A673 (cell line): ENCODE measurements at regions of chr5 and their contacts with region 1.

Region 1: DNA sequence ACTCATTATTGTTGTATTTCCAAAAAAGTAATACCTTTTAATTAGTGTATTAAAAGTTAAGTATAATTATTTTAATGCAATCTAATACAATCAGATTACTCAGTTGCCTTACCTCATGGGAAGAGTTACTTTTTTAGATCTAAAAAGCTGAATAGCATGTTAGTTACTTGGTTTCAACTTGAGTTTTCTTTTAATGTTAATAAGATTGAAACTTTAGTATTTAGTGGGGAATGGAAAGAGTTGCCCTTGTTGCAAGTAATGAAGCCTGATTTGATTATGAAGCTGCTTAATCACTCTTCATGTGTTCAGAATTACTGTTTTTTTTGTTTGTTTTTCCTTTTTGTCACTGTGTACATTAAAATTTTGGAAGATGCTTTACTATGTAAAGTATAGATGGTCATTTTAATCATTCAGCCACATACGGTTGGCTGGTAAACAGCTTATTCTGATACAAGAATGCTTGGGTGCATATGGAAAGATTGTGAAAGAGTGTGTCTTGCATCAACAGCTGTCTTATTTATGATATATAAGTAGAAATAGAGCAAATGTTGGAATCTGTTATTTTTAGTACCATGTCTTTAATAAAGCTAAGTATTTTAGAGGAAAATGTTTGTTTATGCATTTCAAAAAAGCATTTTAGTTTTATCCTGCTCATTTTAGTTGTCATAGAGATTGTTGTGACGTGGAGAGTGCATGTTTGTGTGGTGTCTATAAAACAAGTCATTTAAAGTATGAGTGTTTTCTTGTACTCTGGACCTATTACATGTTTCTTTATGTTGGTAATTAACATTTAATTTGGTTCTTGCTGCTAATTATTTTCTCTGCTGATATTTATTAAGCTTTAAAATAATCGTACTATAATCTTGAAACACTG is 36.4 kb downstream of the SREK1 start:
- DNase-seq: no peak
- H3K4me3 ChIP-seq: no peak overlapping the region
- H3K27ac ChIP-seq: no peak overlapping the region
- H3K4me1 ChIP-seq: peaks cover 6% of the 10 kb centered on the region
- H3K27me3 ChIP-seq: no peaks in the 10 kb centered on the region
- CTCF ChIP-seq: no peak

Region 2: DNA sequence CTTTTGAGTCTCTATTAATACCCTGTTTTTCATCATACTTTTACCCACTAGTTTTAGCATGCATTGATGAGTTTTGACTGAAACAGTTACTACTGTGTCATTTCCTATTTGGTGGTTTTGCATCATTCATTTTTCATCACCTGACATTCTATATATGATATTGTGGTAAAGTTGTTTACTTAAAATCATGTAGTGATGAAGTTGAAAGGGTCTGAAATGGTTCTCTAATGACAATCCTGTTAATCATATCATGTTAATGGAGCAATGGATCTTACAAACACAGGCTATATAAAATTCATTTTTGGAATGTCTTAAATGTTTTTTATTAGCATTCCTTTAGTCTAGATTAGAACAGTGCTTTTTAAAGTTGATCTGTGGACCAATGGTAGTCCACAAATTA is 170.0 kb before region 1 on chr5:
- CTCF ChIA-PET with region 1: no interaction called
- POLR2A ChIA-PET with region 1: no interaction called
- intact Hi-C with region 1: no loop called
- DNase-seq: no peak
- H3K4me3 ChIP-seq: no peak overlapping the region
- H3K27ac ChIP-seq: no peak overlapping the region
- H3K4me1 ChIP-seq: no peaks in the 10 kb centered on the region
- H3K27me3 ChIP-seq: no peaks in the 10 kb centered on the region
- CTCF ChIP-seq: no peak

Region 3: DNA sequence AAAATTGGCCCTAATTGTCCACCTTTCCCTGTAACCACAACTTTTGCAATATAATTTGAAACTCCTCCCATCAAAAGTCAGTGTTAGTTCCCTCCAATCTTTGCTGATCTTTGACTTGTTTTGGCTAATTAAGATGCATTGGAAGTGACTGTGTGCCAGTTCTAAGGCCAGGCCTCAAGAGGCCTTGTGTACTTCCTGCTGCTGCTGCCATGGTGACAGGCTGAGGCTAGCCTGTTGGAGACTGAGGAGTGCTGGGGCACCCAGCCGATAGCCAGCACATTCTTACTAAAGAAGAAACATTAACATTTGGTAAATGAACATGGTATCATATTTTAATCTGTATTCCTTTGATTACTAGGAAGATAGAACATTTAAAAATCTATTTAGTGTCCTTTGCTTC is 50.0 kb after region 1 on chr5:
- CTCF ChIA-PET with region 1: no interaction called
- POLR2A ChIA-PET with region 1: no interaction called
- intact Hi-C with region 1: no loop called
- DNase-seq: no peak
- H3K4me3 ChIP-seq: no peak overlapping the region
- H3K27ac ChIP-seq: no peak overlapping the region
- H3K4me1 ChIP-seq: no peaks in the 10 kb centered on the region
- H3K27me3 ChIP-seq: no peaks in the 10 kb centered on the region
- CTCF ChIP-seq: no peak

Region 4: GRCh38 chr5:66757188-66757833 is 576.8 kb after region 1 on chr5:
- CTCF ChIA-PET with region 1: no interaction called
- POLR2A ChIA-PET with region 1: no interaction called
- intact Hi-C with region 1: loop called (anchors 5 kb)
- DNase-seq: peak; percentile 59
- H3K4me3 ChIP-seq: no peak overlapping the region
- H3K27ac ChIP-seq: no peak overlapping the region
- H3K4me1 ChIP-seq: no peaks in the 10 kb centered on the region
- H3K27me3 ChIP-seq: peaks cover 10% of the 10 kb centered on the region
- CTCF ChIP-seq: peak; percentile 63

Region 5: GRCh38 chr5:66874004-66874403 is 693.5 kb after region 1 on chr5:
- CTCF ChIA-PET with region 1: interaction called, 11 read pairs
- POLR2A ChIA-PET with region 1: no interaction called
- intact Hi-C with region 1: no loop called
- DNase-seq: no peak
- H3K4me3 ChIP-seq: no peak overlapping the region
- H3K27ac ChIP-seq: no peak overlapping the region
- H3K4me1 ChIP-seq: no peaks in the 10 kb centered on the region
- H3K27me3 ChIP-seq: no peaks in the 10 kb centered on the region
- CTCF ChIP-seq: no peak